ENCODE measurements at regions of chr5 and their contacts with region 1.

Region 1: GRCh38 chr5:82259172-82259800 is 18.9 kb downstream of the RPS23 start:
- DNase-seq: peak; percentile 30
- H3K4me3 ChIP-seq: no peak overlapping the region; a peak in 1 of 4 replicates
- H3K27ac ChIP-seq: no peak overlapping the region
- H3K4me1 ChIP-seq: no peaks in the 10 kb centered on the region
- H3K27me3 ChIP-seq: no peaks in the 10 kb centered on the region
- CTCF ChIP-seq: peak; percentile 67
- EP300 ChIP-seq: no peak
- RAD21 ChIP-seq: peak; percentile 62

Region 2: GRCh38 chr5:81425569-81425968 is 833.7 kb before region 1 on chr5:
- CTCF ChIA-PET with region 1: interaction called, 13 read pairs
- POLR2A ChIA-PET with region 1: no interaction called
- DNase-seq: peak; percentile 45
- H3K4me3 ChIP-seq: no peak overlapping the region; a peak in 1 of 4 replicates
- H3K27ac ChIP-seq: peak overlapping the region in 1 of 2 experiments; percentile 30; a peak in 1 of 4 replicates
- H3K4me1 ChIP-seq: peaks cover 2 to 25% of the 10 kb centered on the region in 2 experiments
- H3K27me3 ChIP-seq: no peaks in the 10 kb centered on the region
- CTCF ChIP-seq: peak; percentile 76
- EP300 ChIP-seq: no peak
- RAD21 ChIP-seq: peak; percentile 75

Region 3: GRCh38 chr5:82244854-82245635 is 14.2 kb before region 1 on chr5:
- CTCF ChIA-PET with region 1: interaction called, 15 read pairs
- POLR2A ChIA-PET with region 1: no interaction called
- DNase-seq: no peak
- H3K4me3 ChIP-seq: no peak overlapping the region
- H3K27ac ChIP-seq: no peak overlapping the region
- H3K4me1 ChIP-seq: no peaks in the 10 kb centered on the region
- H3K27me3 ChIP-seq: no peaks in the 10 kb centered on the region
- CTCF ChIP-seq: no peak
- EP300 ChIP-seq: no peak
- RAD21 ChIP-seq: no peak

Region 4: GRCh38 chr5:82278095-82278918 is 19.0 kb after region 1 on chr5 and contains the start of gene RPS23:
- CTCF ChIA-PET with region 1: interaction called, 14 read pairs
- POLR2A ChIA-PET with region 1: no interaction called
- DNase-seq: peak; percentile 91
- H3K4me3 ChIP-seq: peak within 1 kb of the TSS; percentile 85 to 94
- H3K27ac ChIP-seq: peak within 1 kb of the TSS; percentile 82 to 95
- H3K4me1 ChIP-seq: peaks cover 8 to 10% of the 10 kb centered on the region in 2 experiments; a peak in 3 of 4 replicates
- H3K27me3 ChIP-seq: no peaks in the 10 kb centered on the region
- CTCF ChIP-seq: no peak
- EP300 ChIP-seq: no peak
- RAD21 ChIP-seq: no peak
- polyA plus RNA-seq, gene RPS23: 5,671 and 6,732 TPM in 2 replicates

Region 5: GRCh38 chr5:82641331-82642003 is 382.2 kb after region 1 on chr5:
- CTCF ChIA-PET with region 1: no interaction called
- POLR2A ChIA-PET with region 1: no interaction called
- DNase-seq: peak; percentile 64
- H3K4me3 ChIP-seq: no peak overlapping the region
- H3K27ac ChIP-seq: peak overlapping the region in 1 of 2 experiments; percentile 86; a peak in 3 of 4 replicates
- H3K4me1 ChIP-seq: peaks cover 0 to 15% of the 10 kb centered on the region in 2 experiments; a peak in 2 of 4 replicates
- H3K27me3 ChIP-seq: no peaks in the 10 kb centered on the region
- CTCF ChIP-seq: peak; percentile 78
- EP300 ChIP-seq: peak in 1 of 2 experiments; percentile 46; a peak in 1 of 4 replicates
- RAD21 ChIP-seq: peak; percentile 97

Measured in SK-N-SH (cell line).